ENCODE measurements at regions of chr6 and their contacts with region 1.

Region 1: GRCh38 chr6:31271641-31272357 is at the start of gene HLA-C:
- DNase-seq: peak; percentile 78 to 96 (median 92)
- ATAC-seq: peak; percentile 90
- H3K4me3 ChIP-seq: peak within 1 kb of the TSS; percentile 83
- H3K4me3 Mint-ChIP-seq: peak within 1 kb of the TSS; percentile 89 to 100 (median 94)
- H3K27ac ChIP-seq: peak within 1 kb of the TSS; percentile 99
- H3K27ac Mint-ChIP-seq: peak within 1 kb of the TSS; percentile 99 to 100 (median 100)
- H3K4me1 ChIP-seq: peaks cover 25 to 41% of the 10 kb centered on the region in 2 donors
- H3K4me1 Mint-ChIP-seq: peaks cover 53 to 69% (median 62%) of the 10 kb centered on the region in 7 donors
- H3K27me3 ChIP-seq: no peaks in the 10 kb centered on the region
- H3K27me3 Mint-ChIP-seq: peaks cover 0 to 19% (median 0%) of the 10 kb centered on the region in 5 donors
- total RNA-seq, gene HLA-C: 1,349 to 2,513 (median 1,489) TPM

Region 2: GRCh38 chr6:31203345-31203979 is 68.3 kb before region 1 on chr6:
- CTCF ChIA-PET with region 1: no interaction called
- POLR2A ChIA-PET with region 1: interaction called, 50 read pairs
- intact Hi-C with region 1: loop called in 1 of 2 experiments (anchors 1 kb)
- DNase-seq: peak in 3 of 9 donors; percentile 13 to 73 (median 55)
- ATAC-seq: peak; percentile 81
- H3K4me3 ChIP-seq: peak overlapping the region; percentile 67
- H3K4me3 Mint-ChIP-seq: peak overlapping the region; percentile 74 to 96 (median 89)
- H3K27ac ChIP-seq: peak overlapping the region; percentile 73
- H3K27ac Mint-ChIP-seq: peak overlapping the region; percentile 82 to 97 (median 96)
- H3K4me1 ChIP-seq: peaks cover 29 to 41% of the 10 kb centered on the region in 2 donors
- H3K4me1 Mint-ChIP-seq: peaks cover 49 to 73% (median 64%) of the 10 kb centered on the region in 7 donors
- H3K27me3 ChIP-seq: no peaks in the 10 kb centered on the region
- H3K27me3 Mint-ChIP-seq: no peaks in the 10 kb centered on the region

Region 3: GRCh38 chr6:31216208-31216898 is 55.4 kb before region 1 on chr6:
- CTCF ChIA-PET with region 1: no interaction called
- POLR2A ChIA-PET with region 1: no interaction called
- intact Hi-C with region 1: no loop called
- DNase-seq: no peak
- ATAC-seq: peak; percentile 66
- H3K4me3 ChIP-seq: no peak overlapping the region
- H3K4me3 Mint-ChIP-seq: peak overlapping the region in 1 of 10 donors; percentile 52
- H3K27ac ChIP-seq: no peak overlapping the region
- H3K27ac Mint-ChIP-seq: peak overlapping the region in 1 of 9 donors; percentile 64
- H3K4me1 ChIP-seq: no peaks in the 10 kb centered on the region
- H3K4me1 Mint-ChIP-seq: peaks cover 0 to 6% (median 0%) of the 10 kb centered on the region in 7 donors
- H3K27me3 ChIP-seq: no peaks in the 10 kb centered on the region
- H3K27me3 Mint-ChIP-seq: peaks cover 0 to 4% (median 0%) of the 10 kb centered on the region in 5 donors

Region 4: DNA sequence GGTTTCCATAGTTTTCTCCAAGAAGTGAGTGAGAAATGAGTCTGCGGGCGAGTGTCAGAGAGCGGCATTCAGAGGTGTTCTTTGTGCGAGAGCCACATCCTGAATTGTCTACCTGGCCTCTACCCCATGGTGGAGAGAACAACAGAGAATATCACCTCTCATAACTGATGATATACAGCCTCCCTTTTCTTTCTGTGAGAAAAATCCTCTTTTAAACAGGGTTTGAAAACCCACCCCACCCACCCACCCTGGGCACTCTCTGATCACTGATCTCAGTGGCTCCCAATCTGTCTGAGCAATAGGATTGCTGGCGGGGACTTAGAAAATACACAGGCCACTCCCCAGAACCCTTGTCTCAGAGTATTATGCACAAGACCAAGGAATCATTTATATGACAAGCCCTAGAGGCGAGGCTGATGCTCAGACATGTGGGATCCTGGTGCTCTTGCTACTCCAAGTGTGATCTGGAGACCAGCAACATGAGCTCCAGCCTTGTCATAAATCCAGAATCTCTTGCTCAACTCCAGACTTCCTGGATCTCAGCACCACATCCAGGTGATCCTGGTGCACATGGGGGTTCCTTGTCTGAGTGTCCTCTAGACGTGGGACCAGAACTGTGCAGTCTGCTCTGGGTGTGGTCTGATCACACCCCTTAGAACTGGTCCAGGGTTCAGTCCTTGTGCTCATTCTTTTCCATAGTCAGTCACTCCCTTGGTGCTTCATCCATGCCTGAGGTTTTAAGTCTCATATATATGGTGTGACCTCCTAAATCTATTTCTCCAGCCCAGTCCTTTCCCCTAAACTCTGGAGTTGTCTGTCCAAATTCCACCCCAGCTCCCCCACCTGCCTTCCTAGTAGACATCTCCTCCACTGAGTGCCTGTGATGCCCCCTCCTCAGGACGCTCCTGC is 79.9 kb after region 1 on chr6:
- CTCF ChIA-PET with region 1: no interaction called
- POLR2A ChIA-PET with region 1: interaction called, 31 read pairs
- intact Hi-C with region 1: no loop called
- DNase-seq: peak in 8 of 9 donors; percentile 10 to 66 (median 50)
- ATAC-seq: peak; percentile 53
- H3K4me3 ChIP-seq: peak overlapping the region; percentile 19
- H3K4me3 Mint-ChIP-seq: peak overlapping the region; percentile 80 to 100 (median 98)
- H3K27ac ChIP-seq: no peak overlapping the region
- H3K27ac Mint-ChIP-seq: peak overlapping the region; percentile 56 to 100 (median 84)
- H3K4me1 ChIP-seq: peaks cover 32% of the 10 kb centered on the region in 2 donors
- H3K4me1 Mint-ChIP-seq: peaks cover 37 to 69% (median 60%) of the 10 kb centered on the region in 7 donors
- H3K27me3 ChIP-seq: no peaks in the 10 kb centered on the region
- H3K27me3 Mint-ChIP-seq: peaks cover 0 to 12% (median 0%) of the 10 kb centered on the region in 5 donors

Region 5: GRCh38 chr6:31366693-31367470 is 95.1 kb after region 1 on chr6:
- CTCF ChIA-PET with region 1: interaction called, 3 read pairs
- POLR2A ChIA-PET with region 1: interaction called, 14 read pairs
- intact Hi-C with region 1: loop called in 1 of 2 experiments (anchors 1 kb)
- DNase-seq: peak; percentile 78 to 94 (median 86)
- ATAC-seq: peak; percentile 99
- H3K4me3 ChIP-seq: peak overlapping the region; percentile 58
- H3K4me3 Mint-ChIP-seq: peak overlapping the region; percentile 80 to 92 (median 84)
- H3K27ac ChIP-seq: peak overlapping the region; percentile 41
- H3K27ac Mint-ChIP-seq: peak overlapping the region; percentile 40 to 92 (median 79)
- H3K4me1 ChIP-seq: peaks cover 0 to 4% of the 10 kb centered on the region in 2 donors
- H3K4me1 Mint-ChIP-seq: peaks cover 3 to 32% (median 17%) of the 10 kb centered on the region in 7 donors
- H3K27me3 ChIP-seq: no peaks in the 10 kb centered on the region
- H3K27me3 Mint-ChIP-seq: peaks cover 0 to 77% (median 19%) of the 10 kb centered on the region in 5 donors

Region 6: DNA sequence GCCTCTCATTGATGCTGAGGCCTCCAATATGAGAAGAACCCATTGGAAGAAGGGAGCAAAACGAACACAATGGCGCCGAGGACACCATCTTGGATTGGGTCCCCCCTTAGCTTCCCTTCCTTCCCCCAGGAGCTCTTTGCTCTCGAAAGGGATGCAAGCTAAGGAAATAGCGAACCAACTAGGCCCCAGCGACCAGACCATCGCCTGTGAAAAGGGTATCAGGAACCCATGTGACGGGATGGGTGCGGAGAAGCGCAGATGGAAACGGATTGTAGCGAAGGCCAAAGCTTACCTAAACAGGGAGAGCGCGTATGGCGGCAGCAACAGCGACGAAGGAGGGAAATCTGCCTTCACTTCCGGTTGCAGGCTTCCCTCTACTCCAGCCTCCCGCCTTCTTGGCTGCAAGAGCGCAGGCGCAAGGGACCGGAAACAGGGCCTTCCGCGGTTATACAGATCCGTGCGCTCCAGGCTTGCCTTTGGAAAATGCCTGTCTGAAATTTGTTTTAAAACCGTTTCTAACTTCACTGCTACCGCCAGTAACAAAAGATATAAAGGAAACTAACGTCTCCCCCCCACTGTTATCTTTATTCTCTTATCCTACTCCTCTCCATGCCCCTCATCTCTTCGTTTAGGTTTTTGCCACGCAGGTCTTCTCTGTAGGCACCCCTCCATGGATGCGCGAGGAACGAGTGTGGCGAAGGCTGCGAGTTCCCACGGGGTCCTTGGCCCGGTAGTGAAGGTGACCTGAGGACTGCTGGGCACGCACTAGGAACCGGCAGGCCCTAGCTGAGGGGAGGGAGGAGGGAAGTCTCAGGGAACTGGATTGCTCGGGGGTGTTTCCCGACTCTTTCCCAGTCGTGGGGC is 270.1 kb after region 1 on chr6 and contains the start of gene DDX39B:
- CTCF ChIA-PET with region 1: no interaction called
- POLR2A ChIA-PET with region 1: no interaction called
- intact Hi-C with region 1: loop called in 1 of 2 experiments (anchors 2 kb)
- DNase-seq: peak; percentile 80 to 97 (median 94)
- ATAC-seq: peak; percentile 83
- H3K4me3 ChIP-seq: peak within 1 kb of the TSS; percentile 77
- H3K4me3 Mint-ChIP-seq: peak within 1 kb of the TSS; percentile 84 to 99 (median 98)
- H3K27ac ChIP-seq: peak within 1 kb of the TSS; percentile 97
- H3K27ac Mint-ChIP-seq: peak within 1 kb of the TSS; percentile 90 to 100 (median 100)
- H3K4me1 ChIP-seq: peaks cover 34 to 45% of the 10 kb centered on the region in 2 donors
- H3K4me1 Mint-ChIP-seq: peaks cover 34 to 65% (median 55%) of the 10 kb centered on the region in 7 donors
- H3K27me3 ChIP-seq: no peaks in the 10 kb centered on the region
- H3K27me3 Mint-ChIP-seq: no peaks in the 10 kb centered on the region
- total RNA-seq, gene DDX39B: 443 to 761 (median 546) TPM

Measured in naive thymus-derived CD4-positive, alpha-beta T cell (primary cell).